ENCODE measurements at regions of chr4 and their contacts with region 1.

Region 1: DNA sequence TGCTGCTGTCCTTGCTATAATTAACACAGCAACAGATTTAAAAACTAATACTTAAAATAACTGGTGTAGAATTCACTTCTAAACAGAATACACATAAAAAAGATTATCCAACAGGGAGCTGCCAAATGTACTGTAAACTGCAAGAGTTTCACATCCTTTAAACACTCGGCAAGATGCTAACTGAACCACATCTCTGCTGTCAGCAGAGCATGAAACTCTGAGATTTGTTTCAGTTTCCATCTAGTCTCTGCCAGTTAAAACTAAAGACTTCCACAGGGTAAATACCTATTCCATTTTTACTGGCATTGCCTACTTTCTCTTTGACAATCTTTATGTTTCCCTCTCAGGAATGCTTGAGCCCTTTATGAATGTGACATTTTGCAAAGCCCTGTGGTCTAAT is 127.7 kb downstream of the SLC7A11 start:
- DNase-seq: no peak
- ATAC-seq: peak; percentile 97
- H3K4me3 Mint-ChIP-seq: peak overlapping the region; percentile 22
- H3K27ac Mint-ChIP-seq: peak overlapping the region; percentile 81
- H3K4me1 Mint-ChIP-seq: peaks cover 31% of the 10 kb centered on the region
- H3K27me3 Mint-ChIP-seq: no peaks in the 10 kb centered on the region
- CTCF ChIP-seq: no peak

Region 2: GRCh38 chr4:138190452-138190858 is 76.0 kb after region 1 on chr4:
- CTCF ChIA-PET with region 1: no interaction called
- POLR2A ChIA-PET with region 1: no interaction called
- intact Hi-C with region 1: loop called (anchors 1 kb)
- DNase-seq: no peak
- ATAC-seq: peak; percentile 90
- H3K4me3 Mint-ChIP-seq: peak overlapping the region; percentile 59
- H3K27ac Mint-ChIP-seq: peak overlapping the region; percentile 66
- H3K4me1 Mint-ChIP-seq: peaks cover 24% of the 10 kb centered on the region
- H3K27me3 Mint-ChIP-seq: no peaks in the 10 kb centered on the region
- CTCF ChIP-seq: no peak

Region 3: DNA sequence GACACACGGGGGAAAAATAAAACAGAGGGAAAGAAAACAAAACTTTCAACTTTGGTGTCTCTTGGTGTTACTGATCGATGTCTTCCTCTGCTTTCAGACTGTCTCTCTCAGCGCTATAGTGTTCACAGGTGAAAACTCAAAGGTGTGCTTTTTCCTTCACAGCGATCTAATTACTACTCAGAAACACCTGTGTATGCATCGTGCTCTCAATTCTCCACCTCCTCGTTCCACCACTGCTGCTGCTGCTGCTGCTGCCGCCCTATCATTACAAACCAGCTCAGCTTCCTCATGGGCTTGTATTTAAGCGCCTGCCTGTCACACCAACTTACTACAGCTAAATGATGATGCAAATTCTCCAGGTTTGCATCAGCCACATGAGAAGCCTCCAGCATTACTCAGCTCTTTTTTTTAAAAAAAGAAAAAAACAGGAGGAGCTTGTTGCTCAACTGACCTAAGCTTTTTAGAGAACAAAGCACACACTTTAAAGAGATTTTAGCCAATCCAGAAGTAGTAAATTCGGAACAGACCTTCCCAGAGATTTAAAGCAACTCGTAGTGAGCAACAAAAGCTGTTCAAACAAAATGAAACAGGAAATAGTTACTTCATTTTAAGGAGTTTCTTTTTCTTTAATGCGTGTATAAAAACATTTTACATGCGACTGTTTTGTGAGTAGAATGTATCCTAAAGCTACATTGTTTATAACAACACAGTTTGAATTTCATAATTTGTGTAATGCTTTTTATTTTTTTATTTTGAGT is 127.8 kb after region 1 on chr4 and contains the start of gene SLC7A11:
- CTCF ChIA-PET with region 1: no interaction called
- POLR2A ChIA-PET with region 1: no interaction called
- intact Hi-C with region 1: loop called (anchors 1 kb)
- DNase-seq: no peak
- ATAC-seq: peak; percentile 95
- H3K4me3 Mint-ChIP-seq: peak within 1 kb of the TSS; percentile 84
- H3K27ac Mint-ChIP-seq: peak within 1 kb of the TSS; percentile 54
- H3K4me1 Mint-ChIP-seq: peaks cover 16% of the 10 kb centered on the region
- H3K27me3 Mint-ChIP-seq: no peaks in the 10 kb centered on the region
- CTCF ChIP-seq: no peak
- total RNA-seq, gene SLC7A11: 1.2 and 1.4 TPM in 2 replicates